Activated naive CD8-positive, alpha-beta T cell treated with anti-CD3 and anti-CD28 coated beads, Interleukin-2, amount 10 ng/mL, durations not matched to agents 7 days and 5 days (primary cell): ENCODE measurements at regions of chr12 and their contacts with region 1.

Region 1: GRCh38 chr12:9741726-9742125 is 8.8 kb upstream of the CLECL1 start:
- DNase-seq: peak; percentile 54
- ATAC-seq: peak; percentile 66
- H3K4me3 Mint-ChIP-seq: peak overlapping the region; percentile 94
- H3K27ac Mint-ChIP-seq: peak overlapping the region; percentile 99
- H3K4me1 Mint-ChIP-seq: peaks cover 59% of the 10 kb centered on the region
- H3K27me3 Mint-ChIP-seq: no peaks in the 10 kb centered on the region

Region 2: DNA sequence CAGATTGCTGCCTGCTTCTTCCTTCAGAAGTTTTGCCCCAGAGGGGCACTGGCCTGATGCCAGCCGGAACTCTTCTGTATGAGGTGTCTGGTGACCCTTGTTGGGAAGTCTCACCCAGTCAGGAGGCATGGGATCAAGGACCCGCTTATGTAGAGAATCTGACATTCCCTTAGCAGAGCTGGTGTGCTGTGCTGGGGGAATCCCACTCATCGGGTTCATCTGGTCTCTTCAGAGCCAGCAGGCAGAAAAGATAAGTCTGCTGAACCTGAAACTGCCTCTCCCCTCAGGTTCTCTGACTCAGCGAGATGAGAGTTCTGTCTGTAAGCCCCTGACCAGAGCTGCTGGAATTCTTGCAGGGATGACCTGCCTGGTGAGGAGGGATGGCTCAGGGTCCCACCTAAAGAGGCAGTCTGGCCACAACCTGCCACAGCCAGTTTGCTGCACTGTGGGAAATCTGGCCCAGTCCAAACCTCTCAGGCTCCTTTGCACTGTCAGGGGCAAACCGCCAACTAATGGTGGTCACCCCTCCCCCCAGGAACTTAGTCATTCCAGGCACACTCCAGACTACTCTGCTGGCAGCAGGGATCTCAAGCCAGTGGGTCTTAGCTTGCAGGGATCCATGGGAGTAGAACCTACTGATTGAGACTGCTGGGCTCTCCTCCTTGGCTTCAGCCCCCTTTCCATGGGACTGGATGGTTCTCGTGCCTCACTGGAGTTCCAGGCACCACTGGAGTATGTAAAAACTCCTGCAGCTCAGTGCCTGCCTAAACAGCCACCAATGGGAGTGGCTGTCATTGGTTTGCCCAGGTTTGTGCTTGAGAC is 68.1 kb before region 1 on chr12:
- POLR2A ChIA-PET with region 1: interaction called, 15 read pairs
- DNase-seq: peak; percentile 74
- ATAC-seq: peak; percentile 39
- H3K4me3 Mint-ChIP-seq: peak overlapping the region; percentile 95
- H3K27ac Mint-ChIP-seq: peak overlapping the region; percentile 99
- H3K4me1 Mint-ChIP-seq: peaks cover 62% of the 10 kb centered on the region
- H3K27me3 Mint-ChIP-seq: no peaks in the 10 kb centered on the region

Region 3: GRCh38 chr12:9687228-9687627 is 54.5 kb before region 1 on chr12:
- POLR2A ChIA-PET with region 1: no interaction called
- DNase-seq: no peak
- ATAC-seq: no peak
- H3K4me3 Mint-ChIP-seq: no peak overlapping the region
- H3K27ac Mint-ChIP-seq: no peak overlapping the region
- H3K4me1 Mint-ChIP-seq: peaks cover 64% of the 10 kb centered on the region
- H3K27me3 Mint-ChIP-seq: no peaks in the 10 kb centered on the region

Region 4: DNA sequence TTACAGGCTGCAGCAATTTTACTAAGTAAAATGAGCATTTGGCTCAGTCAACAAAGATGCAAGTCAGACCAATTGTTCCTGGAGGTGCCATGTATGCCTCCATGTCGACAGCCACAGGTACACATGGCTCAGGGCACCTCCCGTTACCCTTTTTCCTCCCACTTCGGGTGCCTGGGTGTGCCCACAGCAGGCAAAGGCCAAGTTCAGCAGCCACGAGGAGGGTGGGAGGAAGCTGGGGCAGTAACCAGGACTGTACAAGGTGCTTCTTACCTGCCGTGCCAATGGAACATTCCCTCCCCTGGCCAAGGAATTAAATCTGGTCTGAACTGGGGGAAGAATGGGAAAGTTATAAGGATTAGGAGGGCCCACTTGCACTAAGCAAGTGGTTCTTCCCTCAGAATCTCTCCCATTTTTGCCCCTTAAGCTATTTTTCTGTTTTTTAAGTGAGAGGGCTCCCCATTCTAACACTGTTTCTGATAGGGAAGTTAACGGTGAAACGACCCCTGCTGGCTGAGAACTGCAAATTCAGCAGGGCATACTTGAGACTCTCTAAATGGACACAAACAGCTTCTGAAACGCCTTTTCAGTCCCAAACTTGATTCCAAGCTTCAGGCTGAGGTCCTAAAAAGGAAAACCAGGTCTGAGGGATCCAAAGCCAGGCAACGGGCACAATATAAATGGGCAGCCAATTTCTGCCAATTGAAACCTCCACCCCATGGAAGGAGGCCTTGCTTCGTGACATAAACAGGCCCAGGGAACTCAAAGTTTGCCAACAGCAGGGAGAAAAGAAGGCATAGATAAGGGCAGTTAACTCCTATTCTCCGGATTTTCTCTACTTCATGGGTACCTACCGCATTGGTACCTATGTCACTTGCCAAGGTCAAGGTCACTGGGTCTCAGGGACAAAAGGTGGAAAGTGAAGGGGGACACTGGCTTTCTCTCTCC is 33.6 kb before region 1 on chr12:
- POLR2A ChIA-PET with region 1: interaction called, 12 read pairs
- DNase-seq: peak; percentile 67
- ATAC-seq: peak; percentile 76
- H3K4me3 Mint-ChIP-seq: peak overlapping the region; percentile 79
- H3K27ac Mint-ChIP-seq: peak overlapping the region; percentile 82
- H3K4me1 Mint-ChIP-seq: peaks cover 38% of the 10 kb centered on the region
- H3K27me3 Mint-ChIP-seq: no peaks in the 10 kb centered on the region

Region 5: GRCh38 chr12:9797722-9798619 is 56.2 kb after region 1 on chr12:
- POLR2A ChIA-PET with region 1: interaction called, 22 read pairs
- DNase-seq: no peak
- ATAC-seq: peak; percentile 84
- H3K4me3 Mint-ChIP-seq: peak overlapping the region; percentile 35
- H3K27ac Mint-ChIP-seq: peak overlapping the region; percentile 68
- H3K4me1 Mint-ChIP-seq: peaks cover 39% of the 10 kb centered on the region
- H3K27me3 Mint-ChIP-seq: peaks cover 4% of the 10 kb centered on the region

Region 6: DNA sequence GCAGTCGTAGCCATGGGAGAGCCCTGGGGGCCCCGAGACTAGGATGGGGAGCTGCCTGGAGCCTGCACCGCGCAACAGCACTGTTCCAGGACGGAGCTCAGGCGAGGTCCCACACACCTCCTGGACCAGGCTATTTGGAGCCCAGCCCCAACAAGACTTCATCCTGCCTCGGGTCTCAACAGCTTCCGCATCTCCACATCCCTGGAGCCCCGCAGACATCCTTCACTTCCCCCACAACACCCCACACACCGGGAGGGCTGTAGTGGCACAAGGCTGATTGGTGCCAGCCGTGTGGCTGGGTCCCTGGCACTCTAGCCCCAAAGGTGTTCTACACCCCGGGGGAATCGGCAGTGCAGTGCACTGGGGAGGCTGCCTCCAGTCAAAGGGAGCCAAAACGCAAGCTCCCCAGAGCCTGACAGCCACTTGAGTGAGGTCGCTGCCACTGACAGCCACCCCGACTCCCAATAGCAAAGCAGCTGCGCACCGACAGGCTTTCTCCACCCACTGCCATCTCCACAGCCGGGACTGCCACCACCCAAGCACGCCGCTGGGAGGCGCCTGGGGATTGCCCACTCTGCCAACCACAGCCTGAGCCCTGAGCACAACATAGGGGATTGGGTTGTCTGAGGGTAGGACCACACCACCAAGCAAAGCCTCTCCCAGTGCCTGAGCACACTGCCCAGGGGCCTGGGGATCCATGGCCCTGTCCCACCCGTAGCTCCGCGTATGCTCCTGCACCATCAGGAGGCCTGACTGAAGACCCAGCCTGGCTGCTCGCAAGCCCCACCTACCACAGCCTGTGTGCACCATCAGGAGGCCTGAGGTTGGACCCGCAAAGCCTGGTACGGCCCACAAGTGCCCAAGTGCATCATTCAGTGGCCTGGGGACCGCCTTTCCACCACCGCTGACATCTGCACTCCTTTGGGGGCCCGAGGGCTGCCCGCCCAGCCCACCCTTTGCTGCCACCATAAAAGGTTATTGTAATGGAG is 72.4 kb after region 1 on chr12:
- POLR2A ChIA-PET with region 1: interaction called, 12 read pairs
- DNase-seq: peak; percentile 97
- ATAC-seq: peak; percentile 98
- H3K4me3 Mint-ChIP-seq: peak overlapping the region; percentile 87
- H3K27ac Mint-ChIP-seq: peak overlapping the region; percentile 92
- H3K4me1 Mint-ChIP-seq: peaks cover 24% of the 10 kb centered on the region
- H3K27me3 Mint-ChIP-seq: peaks cover 7% of the 10 kb centered on the region